HAP-1 (cell line): ENCODE measurements at regions of chr6 and their contacts with region 1.

Region 1: DNA sequence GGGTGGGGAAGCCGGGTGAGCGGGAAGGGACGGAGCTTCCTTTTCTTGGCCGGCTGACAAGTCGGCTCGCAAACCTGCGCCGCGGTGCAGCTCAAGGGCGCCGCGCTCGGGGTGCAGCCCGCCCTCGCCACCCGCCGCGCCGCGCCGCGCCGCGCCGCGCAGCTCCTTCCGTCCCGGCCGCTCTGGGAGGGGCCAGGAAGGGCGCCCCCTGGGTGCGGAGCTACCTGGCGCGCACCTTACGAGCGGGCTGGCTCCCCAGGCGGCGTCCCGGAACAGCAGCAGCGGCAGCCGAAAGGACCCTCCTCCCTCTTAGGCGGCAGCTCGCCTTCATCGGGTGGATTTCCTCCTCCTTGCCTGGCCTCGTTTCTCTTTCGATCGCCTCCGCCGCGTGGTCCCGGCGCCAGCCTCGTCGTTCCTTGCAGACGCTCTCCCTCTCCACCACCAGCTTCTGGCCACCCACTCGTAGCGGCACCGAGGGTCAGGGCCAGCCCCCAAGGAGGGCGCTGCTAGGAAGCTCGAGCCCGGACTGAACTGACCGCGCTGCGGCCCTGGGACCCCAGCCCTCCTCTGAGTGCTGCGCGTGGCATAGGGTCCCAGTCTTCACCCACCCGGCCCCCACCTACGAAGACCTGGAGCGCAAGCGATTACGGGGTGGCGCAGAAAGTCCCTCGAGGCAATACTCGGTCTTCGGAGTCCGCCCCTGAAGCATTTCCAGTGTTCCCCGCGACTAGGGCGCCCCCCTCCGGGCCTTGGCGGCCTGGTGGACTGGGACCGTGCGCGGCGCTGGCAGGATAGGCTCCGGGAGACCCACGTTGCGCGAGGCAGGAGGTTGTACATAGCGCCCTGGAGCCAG is at the start of gene MAP3K5:
- DNase-seq: peak; percentile 68 to 94
- H3K4me3 ChIP-seq: peak within 1 kb of the TSS; percentile 67
- H3K4me1 ChIP-seq: peaks cover 17% of the 10 kb centered on the region
- H3K27me3 ChIP-seq: no peaks in the 10 kb centered on the region

Region 2: GRCh38 chr6:136289579-136290409 is 502.8 kb before region 1 on chr6 and contains the start of gene BCLAF1:
- in situ Hi-C with region 1: loop called (anchors 25 kb)
- DNase-seq: peak; percentile 97 to 99
- H3K4me3 ChIP-seq: peak within 1 kb of the TSS; percentile 99
- H3K4me1 ChIP-seq: peaks cover 31% of the 10 kb centered on the region
- H3K27me3 ChIP-seq: no peaks in the 10 kb centered on the region

Region 3: GRCh38 chr6:136643850-136644596 is 148.6 kb before region 1 on chr6:
- in situ Hi-C with region 1: loop called (anchors 5 kb)
- DNase-seq: peak; percentile 81 to 95
- H3K4me3 ChIP-seq: no peak overlapping the region
- H3K4me1 ChIP-seq: peaks cover 3% of the 10 kb centered on the region; the same call in 1 of the 2 replicates
- H3K27me3 ChIP-seq: no peaks in the 10 kb centered on the region